A673 (cell line): ENCODE measurements at regions of chr7 and their contacts with region 1.

Region 1: DNA sequence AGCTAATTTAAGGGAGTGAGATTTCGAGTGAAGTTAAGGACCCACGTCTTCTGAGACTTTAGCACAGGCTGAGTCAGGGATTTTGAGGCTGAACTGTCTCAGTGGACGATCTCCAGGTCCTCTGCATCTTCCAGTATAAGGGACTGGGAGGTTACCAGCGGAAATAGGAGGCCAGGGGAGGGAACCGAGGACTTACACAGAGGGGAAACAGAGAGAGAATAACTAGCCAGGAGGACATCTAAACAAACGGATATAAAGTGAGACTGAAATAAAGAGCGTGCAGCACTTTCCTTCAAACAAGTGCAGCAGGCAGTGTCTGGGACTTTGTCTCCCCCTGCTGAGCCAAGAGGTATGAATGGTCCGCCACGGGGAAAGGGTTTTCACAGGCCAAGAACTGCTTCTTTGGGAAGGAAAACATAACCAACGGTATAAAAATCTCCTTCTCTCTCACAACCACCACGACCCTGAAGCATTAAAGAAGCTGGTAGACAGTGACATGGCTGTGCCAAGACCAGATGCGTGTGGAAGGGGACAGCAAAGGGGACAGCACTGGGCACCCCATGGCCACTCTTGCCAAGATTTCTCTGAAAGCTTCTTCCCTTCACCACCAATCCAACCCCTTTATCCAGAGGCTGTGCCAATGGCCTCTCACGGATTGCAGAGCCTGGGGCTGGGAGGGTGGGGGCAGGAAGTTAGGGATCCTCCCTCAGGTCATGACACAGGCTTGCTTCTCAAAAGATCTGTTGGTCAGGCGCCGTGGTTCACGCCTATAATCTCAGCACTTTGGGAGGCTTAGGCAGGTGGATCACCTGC is 72.0 kb downstream of the SLC37A3 start:
- DNase-seq: peak; percentile 74
- H3K4me3 ChIP-seq: peak overlapping the region; percentile 14
- H3K27ac ChIP-seq: no peak overlapping the region
- H3K4me1 ChIP-seq: no peaks in the 10 kb centered on the region
- H3K27me3 ChIP-seq: no peaks in the 10 kb centered on the region
- CTCF ChIP-seq: peak; percentile 68

Region 2: GRCh38 chr7:139777948-139778841 is 548.1 kb before region 1 on chr7 and contains the start of gene HIPK2:
- CTCF ChIA-PET with region 1: no interaction called
- POLR2A ChIA-PET with region 1: no interaction called
- intact Hi-C with region 1: loop called (anchors 10 kb)
- DNase-seq: peak; percentile 85
- H3K4me3 ChIP-seq: peak within 1 kb of the TSS; percentile 92
- H3K27ac ChIP-seq: peak within 1 kb of the TSS; percentile 65
- H3K4me1 ChIP-seq: peaks cover 16% of the 10 kb centered on the region
- H3K27me3 ChIP-seq: peaks cover 17% of the 10 kb centered on the region
- CTCF ChIP-seq: no peak
- total RNA-seq, gene HIPK2: 30.7 and 32.4 TPM in 2 replicates

Region 3: GRCh38 chr7:140175221-140176121 is 150.9 kb before region 1 on chr7:
- CTCF ChIA-PET with region 1: no interaction called
- POLR2A ChIA-PET with region 1: no interaction called
- intact Hi-C with region 1: loop called (anchors 2 kb)
- DNase-seq: peak; percentile 95
- H3K4me3 ChIP-seq: peak overlapping the region; percentile 84
- H3K27ac ChIP-seq: peak overlapping the region; percentile 77
- H3K4me1 ChIP-seq: no peaks in the 10 kb centered on the region
- H3K27me3 ChIP-seq: no peaks in the 10 kb centered on the region
- CTCF ChIP-seq: peak; percentile 86

Region 4: DNA sequence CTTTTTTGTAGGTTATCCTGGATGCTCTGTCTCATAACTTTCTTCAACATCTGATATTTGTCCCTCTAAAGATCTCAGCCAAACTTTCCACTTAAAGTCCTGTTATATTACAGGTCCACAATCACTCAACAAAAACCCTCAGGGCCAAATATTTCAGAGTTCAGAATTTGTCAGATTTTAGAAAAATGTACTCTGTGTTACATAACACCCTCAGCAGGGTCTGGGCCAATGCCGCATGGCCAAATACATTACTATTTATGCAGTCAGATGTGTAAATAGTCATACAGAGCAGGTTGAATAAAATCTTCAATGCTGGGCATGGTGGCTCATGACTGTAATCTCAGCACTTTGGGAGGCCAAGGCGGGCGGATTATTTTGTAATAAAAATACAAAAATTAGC is 89.0 kb after region 1 on chr7:
- CTCF ChIA-PET with region 1: no interaction called
- POLR2A ChIA-PET with region 1: no interaction called
- intact Hi-C with region 1: no loop called
- DNase-seq: no peak
- H3K4me3 ChIP-seq: no peak overlapping the region
- H3K27ac ChIP-seq: no peak overlapping the region
- H3K4me1 ChIP-seq: no peaks in the 10 kb centered on the region
- H3K27me3 ChIP-seq: no peaks in the 10 kb centered on the region
- CTCF ChIP-seq: no peak